ENCODE measurements at regions of chr10 and their contacts with region 1.

Region 1: DNA sequence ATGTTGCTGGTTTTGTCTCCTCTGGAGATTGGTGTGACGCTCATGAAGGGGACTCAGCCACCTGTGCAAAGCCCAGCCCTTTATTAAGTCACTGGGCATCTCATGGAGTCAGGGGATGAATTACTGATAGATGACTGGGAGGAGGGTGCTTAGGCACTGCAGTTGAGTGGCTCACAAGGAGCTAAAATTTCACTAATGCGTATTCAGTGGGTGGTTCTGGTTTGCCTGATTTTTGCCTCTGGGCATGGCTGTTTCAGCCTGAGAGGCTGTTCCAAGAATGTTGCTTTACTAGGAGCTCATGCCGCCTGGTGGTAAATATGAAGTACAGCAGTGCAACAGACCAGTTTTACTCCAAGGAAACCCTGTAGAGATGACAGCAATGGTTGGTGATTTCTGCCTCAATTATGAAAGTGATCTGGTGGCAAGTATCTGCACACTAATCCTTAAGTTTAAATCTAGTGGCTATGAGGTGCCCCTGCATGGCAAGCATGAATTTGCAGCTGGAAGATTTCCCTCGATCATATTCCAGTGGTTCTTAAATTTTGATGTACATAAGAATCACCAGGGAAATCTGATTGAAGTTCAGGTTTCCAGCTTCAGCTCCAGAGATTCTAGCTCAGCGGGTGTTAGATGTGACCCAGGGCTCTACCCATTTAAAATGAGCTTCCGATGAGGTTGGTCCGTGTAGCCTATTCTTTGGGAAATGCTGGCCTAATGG is 19.9 kb downstream of the ACTA2 start:
- DNase-seq: peak; percentile 27
- H3K4me3 Mint-ChIP-seq: no peak overlapping the region
- H3K27ac Mint-ChIP-seq: no peak overlapping the region
- H3K4me1 Mint-ChIP-seq: peaks cover 27% of the 10 kb centered on the region
- H3K27me3 Mint-ChIP-seq: no peaks in the 10 kb centered on the region

Region 2: GRCh38 chr10:88565072-88565471 is 367.6 kb before region 1 on chr10:
- intact Hi-C with region 1: loop called (anchors 2 kb)
- DNase-seq: no peak
- H3K4me3 Mint-ChIP-seq: no peak overlapping the region
- H3K27ac Mint-ChIP-seq: no peak overlapping the region
- H3K4me1 Mint-ChIP-seq: peaks cover 2% of the 10 kb centered on the region
- H3K27me3 Mint-ChIP-seq: peaks cover 30% of the 10 kb centered on the region

Region 3: DNA sequence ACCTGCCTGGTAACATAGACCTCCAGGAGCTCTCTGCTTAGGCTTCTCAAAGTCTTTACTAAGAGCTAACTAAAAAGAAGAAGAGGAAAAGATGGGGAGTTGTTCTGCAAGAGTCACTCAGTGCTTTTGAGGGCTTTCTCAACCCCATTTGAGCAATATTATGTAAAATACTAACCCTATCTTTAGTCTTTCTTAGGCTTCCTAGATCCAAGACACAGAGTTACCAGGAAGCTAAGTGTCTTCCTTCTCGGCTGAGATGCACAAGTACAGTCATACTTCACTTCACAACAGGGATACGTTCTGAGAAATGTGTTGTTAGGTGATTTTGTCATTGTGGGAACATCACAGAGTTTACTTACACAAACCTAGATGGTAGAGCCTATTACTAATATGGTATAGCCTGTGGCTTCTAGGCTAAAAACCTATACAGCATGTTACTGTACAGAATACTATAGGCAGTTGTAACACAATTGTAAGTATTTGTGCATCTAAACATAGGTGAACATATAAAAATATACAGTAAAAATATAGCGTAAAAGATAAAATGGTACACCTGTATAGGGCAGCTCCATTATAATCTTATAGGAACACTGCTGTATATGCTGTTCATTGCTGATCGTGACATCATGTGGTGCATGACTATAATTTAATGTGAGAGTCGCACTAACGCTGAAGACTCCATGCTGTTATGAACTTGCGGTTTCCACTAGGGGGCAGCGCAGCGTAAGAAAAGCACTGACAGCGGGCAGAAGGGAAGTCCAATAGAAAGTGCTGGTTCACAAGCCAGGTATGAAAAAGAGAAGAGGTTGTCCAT is 97.4 kb before region 1 on chr10:
- intact Hi-C with region 1: loop called (anchors 1 kb)
- DNase-seq: peak; percentile 78
- H3K4me3 Mint-ChIP-seq: no peak overlapping the region
- H3K27ac Mint-ChIP-seq: no peak overlapping the region
- H3K4me1 Mint-ChIP-seq: peaks cover 35% of the 10 kb centered on the region
- H3K27me3 Mint-ChIP-seq: no peaks in the 10 kb centered on the region

Region 4: GRCh38 chr10:88990384-88991160 is 57.9 kb after region 1 on chr10 and contains the start of gene FAS:
- intact Hi-C with region 1: loop called (anchors 2 kb)
- DNase-seq: peak; percentile 70
- H3K4me3 Mint-ChIP-seq: peak within 1 kb of the TSS; percentile 98
- H3K27ac Mint-ChIP-seq: peak within 1 kb of the TSS; percentile 98
- H3K4me1 Mint-ChIP-seq: peaks cover 59% of the 10 kb centered on the region
- H3K27me3 Mint-ChIP-seq: no peaks in the 10 kb centered on the region
- total RNA-seq, gene FAS: 20.7 and 22.5 TPM in 2 replicates

Region 5: GRCh38 chr10:89029785-89030437 is 97.2 kb after region 1 on chr10:
- intact Hi-C with region 1: loop called (anchors 1 kb)
- DNase-seq: peak; percentile 48
- H3K4me3 Mint-ChIP-seq: no peak overlapping the region
- H3K27ac Mint-ChIP-seq: no peak overlapping the region
- H3K4me1 Mint-ChIP-seq: peaks cover 38% of the 10 kb centered on the region
- H3K27me3 Mint-ChIP-seq: no peaks in the 10 kb centered on the region

Measured in activated T-helper 2 cell treated with anti-CD3 and anti-CD28 coated beads, Interferon-gamma antibody, Interleukin-2, Interleukin-4, amounts not matched to agents 10 μg/mL and 5 μg/mL and 100 μg/mL, durations not matched to agents 14 hours and 24 hours and 36 hours (primary cell).